ENCODE measurements at regions of chr9 and their contacts with region 1.

Region 1: DNA sequence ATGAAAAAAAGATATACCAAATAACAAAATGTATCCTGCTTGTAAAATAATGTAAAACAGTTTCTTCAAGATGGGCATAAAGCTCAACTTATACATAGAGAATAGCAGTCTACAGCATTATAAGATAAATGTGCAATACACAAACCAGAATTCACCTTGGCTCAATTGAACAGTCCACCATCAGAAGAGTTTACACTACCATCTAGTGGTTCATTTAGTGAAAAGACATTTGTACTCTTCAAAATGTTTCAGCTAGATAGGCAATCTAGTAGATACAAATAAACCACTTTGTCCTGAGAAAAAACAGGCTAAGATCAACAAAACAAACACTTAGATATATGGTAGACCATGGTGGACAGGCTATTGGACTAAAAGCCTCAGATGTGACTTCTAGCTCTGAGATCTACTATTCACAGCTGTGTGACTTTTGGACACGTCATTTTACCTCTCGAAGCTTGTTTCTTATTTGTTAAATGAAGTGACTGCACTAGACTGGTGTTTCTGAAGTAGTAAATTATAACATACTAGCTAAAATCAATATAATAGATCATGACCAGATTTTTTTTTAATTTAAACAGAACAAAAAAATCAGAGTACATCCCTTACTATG is 22.1 kb upstream of the TPD52L3 start:
- DNase-seq: no peak
- H3K4me3 ChIP-seq: no peak overlapping the region
- H3K27ac ChIP-seq: no peak overlapping the region
- H3K4me1 ChIP-seq: no peaks in the 10 kb centered on the region
- H3K27me3 ChIP-seq: no peaks in the 10 kb centered on the region
- CTCF ChIP-seq: peak; percentile 19 to 89 (median 60)
- POLR2A ChIP-seq: no peak

Region 2: GRCh38 chr9:5886114-5886939 is 419.7 kb before region 1 on chr9:
- intact Hi-C with region 1: loop called (anchors 5 kb)
- DNase-seq: peak; percentile 85 to 89
- H3K4me3 ChIP-seq: no peak overlapping the region
- H3K27ac ChIP-seq: no peak overlapping the region
- H3K4me1 ChIP-seq: peaks cover 14 to 25% of the 10 kb centered on the region in 2 donors
- H3K27me3 ChIP-seq: no peaks in the 10 kb centered on the region
- CTCF ChIP-seq: peak; percentile 84 to 94 (median 90)
- POLR2A ChIP-seq: no peak

Region 3: DNA sequence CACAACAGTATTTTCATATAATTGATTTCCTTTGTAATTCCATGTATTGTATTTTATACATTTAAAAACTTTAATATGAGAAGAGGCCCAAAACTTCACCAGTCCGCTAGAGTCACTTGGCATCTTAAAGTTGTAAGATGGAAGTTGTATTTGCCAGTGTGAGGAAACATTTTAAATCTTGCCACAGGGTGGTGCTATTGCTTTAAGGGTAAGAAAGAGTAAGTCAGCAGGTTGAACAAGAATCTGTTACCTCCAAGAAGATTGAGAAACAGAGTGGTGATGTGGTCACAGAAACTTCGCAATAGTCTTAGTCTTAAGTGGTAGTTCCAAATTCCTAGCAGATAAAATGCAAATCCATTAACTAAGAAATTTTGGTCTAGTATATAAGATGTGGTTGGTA is 250.8 kb before region 1 on chr9:
- intact Hi-C with region 1: loop called (anchors 2 kb)
- DNase-seq: peak; percentile 34 to 50
- H3K4me3 ChIP-seq: no peak overlapping the region
- H3K27ac ChIP-seq: no peak overlapping the region
- H3K4me1 ChIP-seq: peaks cover 0 to 3% of the 10 kb centered on the region in 2 donors
- H3K27me3 ChIP-seq: no peaks in the 10 kb centered on the region
- CTCF ChIP-seq: peak in 5 of 6 experiments; percentile 29 to 85 (median 58)
- POLR2A ChIP-seq: no peak

Region 4: DNA sequence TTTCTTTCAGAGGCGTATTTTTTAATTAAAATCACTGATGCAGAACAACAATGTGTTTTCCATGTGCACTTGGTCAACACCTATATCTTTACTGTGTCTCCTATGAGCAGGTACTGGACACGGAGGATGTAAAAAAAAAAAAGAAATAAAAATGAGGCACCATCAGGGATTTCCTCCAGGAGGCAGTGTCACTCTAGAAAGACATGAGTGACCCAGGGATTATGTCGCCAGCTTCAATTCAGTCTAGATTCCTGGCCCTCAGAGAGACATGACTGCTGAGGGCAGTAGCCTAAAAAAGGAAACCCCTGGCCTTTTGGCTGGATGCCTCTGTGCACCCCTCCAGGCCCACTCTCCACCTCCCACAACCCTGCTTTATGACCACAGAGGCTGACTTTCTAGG is 108.7 kb before region 1 on chr9:
- intact Hi-C with region 1: loop called (anchors 5 kb)
- DNase-seq: peak in 1 of 2 donors; percentile 14
- H3K4me3 ChIP-seq: no peak overlapping the region
- H3K27ac ChIP-seq: no peak overlapping the region
- H3K4me1 ChIP-seq: peaks cover 0 to 5% of the 10 kb centered on the region in 2 donors
- H3K27me3 ChIP-seq: no peaks in the 10 kb centered on the region
- CTCF ChIP-seq: peak; percentile 13 to 74 (median 45)
- POLR2A ChIP-seq: no peak

Region 5: GRCh38 chr9:6247266-6247665 is 58.8 kb before region 1 on chr9:
- intact Hi-C with region 1: no loop called
- DNase-seq: no peak
- H3K4me3 ChIP-seq: no peak overlapping the region
- H3K27ac ChIP-seq: no peak overlapping the region
- H3K4me1 ChIP-seq: no peaks in the 10 kb centered on the region
- H3K27me3 ChIP-seq: no peaks in the 10 kb centered on the region
- CTCF ChIP-seq: no peak
- POLR2A ChIP-seq: no peak

Region 6: DNA sequence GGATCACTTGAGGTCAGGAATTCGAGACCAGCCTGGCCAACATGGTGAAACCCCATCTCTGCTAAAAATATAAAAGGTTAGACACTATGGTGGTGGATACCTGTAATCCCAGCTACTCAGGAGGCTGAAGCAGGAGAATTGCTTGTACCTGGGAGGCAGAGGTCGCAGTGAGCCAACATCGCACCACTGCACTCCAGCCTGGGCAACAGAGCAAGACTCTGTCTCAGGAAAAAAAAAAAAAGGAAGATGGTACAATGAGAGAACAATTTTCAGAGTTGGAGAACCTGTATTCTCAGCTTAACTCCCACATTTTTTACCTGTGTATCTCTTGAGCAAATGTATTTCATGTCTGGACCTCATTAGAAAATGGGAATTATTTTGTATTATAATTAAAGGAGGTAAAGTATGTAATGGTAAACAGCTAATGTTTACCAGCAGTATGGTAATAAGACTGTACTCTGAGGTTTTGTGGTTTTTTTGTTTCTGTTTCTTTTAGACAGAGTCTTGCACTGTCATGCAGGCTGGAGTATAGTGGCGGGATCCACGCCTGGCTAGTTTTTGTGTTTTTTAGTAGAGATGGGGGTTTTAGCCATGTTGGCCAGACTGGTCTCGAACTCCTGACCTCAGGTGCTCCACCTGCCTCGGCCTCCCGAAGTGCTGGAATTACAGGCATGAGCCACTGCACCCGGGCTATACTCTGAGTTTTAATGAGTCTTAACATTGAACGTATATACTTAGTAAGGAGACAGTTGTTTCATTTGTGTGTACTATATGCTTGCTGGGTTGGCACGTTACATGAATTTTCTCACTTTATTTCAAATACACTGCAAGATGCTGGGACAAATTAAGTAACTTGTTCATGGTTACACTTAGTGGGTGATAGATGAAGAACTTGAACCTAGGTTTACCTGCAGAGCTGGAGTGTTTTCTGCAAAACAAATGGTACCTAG is 123.2 kb after region 1 on chr9:
- intact Hi-C with region 1: no loop called
- DNase-seq: peak; percentile 13 to 29
- H3K4me3 ChIP-seq: no peak overlapping the region
- H3K27ac ChIP-seq: no peak overlapping the region
- H3K4me1 ChIP-seq: peaks cover 22 to 27% of the 10 kb centered on the region in 2 donors
- H3K27me3 ChIP-seq: no peaks in the 10 kb centered on the region
- CTCF ChIP-seq: no peak
- POLR2A ChIP-seq: no peak

Region 7: DNA sequence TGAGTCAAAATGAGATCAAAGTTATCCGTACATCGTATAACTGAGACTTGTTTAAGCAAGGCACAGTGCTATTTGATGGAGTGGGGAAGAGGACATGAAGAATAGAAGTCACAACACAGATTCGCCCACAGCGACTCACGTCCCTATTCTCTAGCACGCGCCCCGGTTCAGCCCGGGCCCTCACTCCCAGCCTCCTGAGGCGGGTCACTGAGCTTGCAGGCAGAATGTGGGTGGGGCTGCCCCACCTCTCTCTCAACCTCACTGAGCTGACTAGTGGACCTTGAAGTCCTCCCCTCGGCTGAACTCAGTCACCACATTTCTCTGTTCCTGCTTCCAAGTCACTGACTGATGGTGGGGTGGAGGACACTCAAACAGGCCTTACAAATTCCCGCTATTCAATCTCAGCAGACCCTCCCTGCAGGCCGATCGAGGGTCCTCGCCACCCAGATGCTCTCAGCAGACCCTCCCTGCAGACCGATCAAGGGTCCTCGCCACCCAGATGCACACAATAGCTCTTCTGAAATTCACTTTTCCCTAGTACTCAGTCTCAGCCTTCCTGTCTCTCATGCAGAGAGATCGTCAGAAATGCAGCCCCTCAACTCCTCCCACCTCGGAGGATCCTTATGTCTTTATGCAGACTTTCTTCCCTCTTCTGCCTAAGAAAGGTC is 326.6 kb after region 1 on chr9:
- intact Hi-C with region 1: no loop called
- DNase-seq: peak; percentile 87 to 88
- H3K4me3 ChIP-seq: no peak overlapping the region
- H3K27ac ChIP-seq: peak overlapping the region in 2 of 3 donors; percentile 32 to 64
- H3K4me1 ChIP-seq: peaks cover 5 to 7% of the 10 kb centered on the region in 2 donors
- H3K27me3 ChIP-seq: no peaks in the 10 kb centered on the region
- CTCF ChIP-seq: no peak
- POLR2A ChIP-seq: peak in 1 of 2 donors; percentile 38